CD8-positive, alpha-beta T cell (primary cell): ENCODE measurements at regions of chr12 and their contacts with region 1.

Region 1: GRCh38 chr12:55996715-55997534 is at the start of gene SUOX:
- DNase-seq: peak in 6 of 9 experiments; percentile 7 to 52 (median 26)
- ATAC-seq: no peak
- H3K4me3 ChIP-seq: peak within 1 kb of the TSS; percentile 14 to 34
- H3K4me3 Mint-ChIP-seq: peak within 1 kb of the TSS; percentile 66
- H3K27ac ChIP-seq: no peak within 1 kb of the TSS
- H3K27ac Mint-ChIP-seq: no peak within 1 kb of the TSS
- H3K4me1 ChIP-seq: peaks cover 14% of the 10 kb centered on the region
- H3K4me1 Mint-ChIP-seq: peaks cover 23% of the 10 kb centered on the region
- H3K27me3 ChIP-seq: peaks cover 0 to 12% of the 10 kb centered on the region in 2 experiments
- H3K27me3 Mint-ChIP-seq: peaks cover 6% of the 10 kb centered on the region
- CTCF ChIP-seq: no peak
- total RNA-seq, gene SUOX: 0.72 to 1.2 TPM

Region 2: GRCh38 chr12:55619354-55620138 is 377.4 kb before region 1 on chr12:
- CTCF ChIA-PET with region 1: no interaction called
- POLR2A ChIA-PET with region 1: no interaction called
- intact Hi-C with region 1: no loop called
- DNase-seq: peak in 6 of 9 experiments; percentile 4 to 83 (median 42)
- ATAC-seq: peak; percentile 96
- H3K4me3 ChIP-seq: no peak overlapping the region
- H3K4me3 Mint-ChIP-seq: no peak overlapping the region
- H3K27ac ChIP-seq: no peak overlapping the region
- H3K27ac Mint-ChIP-seq: no peak overlapping the region
- H3K4me1 ChIP-seq: no peaks in the 10 kb centered on the region
- H3K4me1 Mint-ChIP-seq: peaks cover 2% of the 10 kb centered on the region
- H3K27me3 ChIP-seq: no peaks in the 10 kb centered on the region
- H3K27me3 Mint-ChIP-seq: peaks cover 22% of the 10 kb centered on the region
- CTCF ChIP-seq: peak; percentile 86

Region 3: DNA sequence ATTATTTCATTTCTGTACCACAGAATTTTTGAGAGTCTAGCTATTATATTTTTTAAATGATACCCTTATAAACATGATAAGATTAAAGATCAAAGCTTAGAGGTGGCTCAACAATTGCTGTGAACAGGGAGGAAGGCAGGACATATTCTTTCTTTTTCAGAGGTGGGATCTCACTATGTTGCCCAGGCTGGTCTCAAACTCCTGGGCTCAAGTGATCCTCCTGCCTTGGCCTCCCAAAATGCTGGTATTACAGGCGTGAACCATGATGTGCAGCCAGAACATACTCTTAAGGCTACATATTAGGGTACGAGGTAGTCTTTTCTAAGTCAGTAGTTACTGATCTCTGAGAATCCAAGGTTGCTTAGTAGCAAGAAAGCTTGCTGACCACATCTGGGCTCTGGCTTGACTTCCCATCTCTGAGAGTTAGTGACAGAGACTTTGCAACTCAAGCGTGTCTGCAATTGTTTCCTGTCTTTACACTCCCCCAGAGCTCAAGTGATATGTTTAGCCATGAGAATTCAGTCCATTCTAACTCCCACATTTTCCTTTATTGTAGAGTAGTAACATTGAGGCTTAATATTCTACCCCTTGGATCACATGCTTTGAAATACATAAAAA is 14.5 kb before region 1 on chr12:
- CTCF ChIA-PET with region 1: interaction called, 33 read pairs
- POLR2A ChIA-PET with region 1: no interaction called
- intact Hi-C with region 1: no loop called
- DNase-seq: no peak
- ATAC-seq: no peak
- H3K4me3 ChIP-seq: no peak overlapping the region
- H3K4me3 Mint-ChIP-seq: no peak overlapping the region
- H3K27ac ChIP-seq: no peak overlapping the region
- H3K27ac Mint-ChIP-seq: no peak overlapping the region
- H3K4me1 ChIP-seq: no peaks in the 10 kb centered on the region
- H3K4me1 Mint-ChIP-seq: peaks cover 35% of the 10 kb centered on the region
- H3K27me3 ChIP-seq: no peaks in the 10 kb centered on the region
- H3K27me3 Mint-ChIP-seq: no peaks in the 10 kb centered on the region
- CTCF ChIP-seq: no peak

Region 4: GRCh38 chr12:56014206-56014605 is 17.3 kb after region 1 on chr12:
- CTCF ChIA-PET with region 1: interaction called, 11 read pairs
- POLR2A ChIA-PET with region 1: interaction called, 3 read pairs
- intact Hi-C with region 1: no loop called
- DNase-seq: no peak
- ATAC-seq: no peak
- H3K4me3 ChIP-seq: no peak overlapping the region
- H3K4me3 Mint-ChIP-seq: no peak overlapping the region
- H3K27ac ChIP-seq: no peak overlapping the region
- H3K27ac Mint-ChIP-seq: no peak overlapping the region
- H3K4me1 ChIP-seq: no peaks in the 10 kb centered on the region
- H3K4me1 Mint-ChIP-seq: no peaks in the 10 kb centered on the region
- H3K27me3 ChIP-seq: no peaks in the 10 kb centered on the region
- H3K27me3 Mint-ChIP-seq: no peaks in the 10 kb centered on the region
- CTCF ChIP-seq: no peak

Region 5: GRCh38 chr12:56029666-56030293 is 32.9 kb after region 1 on chr12:
- CTCF ChIA-PET with region 1: interaction called, 54 read pairs
- POLR2A ChIA-PET with region 1: interaction called, 3 read pairs
- intact Hi-C with region 1: loop called (anchors 1 kb)
- DNase-seq: peak in 6 of 9 experiments; percentile 40 to 67 (median 53)
- ATAC-seq: peak; percentile 41
- H3K4me3 ChIP-seq: no peak overlapping the region
- H3K4me3 Mint-ChIP-seq: no peak overlapping the region
- H3K27ac ChIP-seq: no peak overlapping the region
- H3K27ac Mint-ChIP-seq: peak overlapping the region; percentile 73
- H3K4me1 ChIP-seq: peaks cover 23% of the 10 kb centered on the region
- H3K4me1 Mint-ChIP-seq: peaks cover 26% of the 10 kb centered on the region
- H3K27me3 ChIP-seq: no peaks in the 10 kb centered on the region
- H3K27me3 Mint-ChIP-seq: no peaks in the 10 kb centered on the region
- CTCF ChIP-seq: peak; percentile 63

Region 6: GRCh38 chr12:56476972-56477432 is 480.1 kb after region 1 on chr12:
- CTCF ChIA-PET with region 1: no interaction called
- POLR2A ChIA-PET with region 1: no interaction called
- intact Hi-C with region 1: no loop called
- DNase-seq: no peak
- ATAC-seq: no peak
- H3K4me3 ChIP-seq: no peak overlapping the region
- H3K4me3 Mint-ChIP-seq: no peak overlapping the region
- H3K27ac ChIP-seq: no peak overlapping the region
- H3K27ac Mint-ChIP-seq: no peak overlapping the region
- H3K4me1 ChIP-seq: no peaks in the 10 kb centered on the region
- H3K4me1 Mint-ChIP-seq: no peaks in the 10 kb centered on the region
- H3K27me3 ChIP-seq: no peaks in the 10 kb centered on the region
- H3K27me3 Mint-ChIP-seq: no peaks in the 10 kb centered on the region
- CTCF ChIP-seq: no peak